B cell (primary cell): ENCODE measurements at regions of chr1 and their contacts with region 1.

Region 1: DNA sequence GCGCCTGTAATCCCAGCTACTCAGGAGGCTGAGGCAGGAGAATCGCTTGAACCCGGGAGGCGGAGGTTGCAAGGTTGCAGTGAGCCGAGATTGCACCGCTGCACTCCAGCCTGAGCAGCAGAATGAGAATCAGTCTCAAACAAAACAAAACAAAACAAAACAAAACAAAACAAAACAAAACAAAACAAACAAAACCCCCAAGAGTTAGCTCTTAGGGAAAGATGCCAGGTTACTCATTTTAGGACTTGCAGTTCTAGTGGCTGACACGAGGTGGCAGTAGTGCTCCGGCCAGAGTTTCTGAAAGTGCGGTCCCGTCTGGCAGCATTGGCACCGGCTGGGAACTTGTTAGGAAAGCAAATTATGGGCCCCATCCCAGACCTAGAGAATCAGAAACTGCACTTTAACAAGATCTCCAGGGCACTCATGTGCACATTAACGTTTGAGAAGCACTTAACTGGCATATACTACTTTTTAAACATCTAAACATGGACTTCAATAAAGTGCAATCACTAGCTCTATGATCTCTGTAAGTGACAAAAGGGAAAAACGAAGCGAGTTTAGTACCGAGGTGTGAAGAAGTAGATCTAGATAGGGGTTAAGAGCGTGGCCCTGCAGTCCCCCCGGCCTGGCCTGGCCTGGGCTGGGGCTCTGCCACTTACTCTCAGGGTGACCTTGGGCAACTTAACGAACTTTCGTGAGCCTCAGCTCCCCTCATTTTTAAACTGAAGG is 41.9 kb upstream of the TNFRSF1B start:
- DNase-seq: peak; percentile 87
- ATAC-seq: peak; percentile 85
- H3K4me3 ChIP-seq: no peak overlapping the region
- H3K4me3 Mint-ChIP-seq: peak overlapping the region; percentile 65
- H3K27ac ChIP-seq: no peak overlapping the region
- H3K27ac Mint-ChIP-seq: peak overlapping the region; percentile 83
- H3K4me1 ChIP-seq: peaks cover 20 to 31% of the 10 kb centered on the region in 2 donors
- H3K4me1 Mint-ChIP-seq: peaks cover 33% of the 10 kb centered on the region
- H3K27me3 ChIP-seq: no peaks in the 10 kb centered on the region
- H3K27me3 Mint-ChIP-seq: no peaks in the 10 kb centered on the region
- CTCF ChIP-seq: peak; percentile 93

Region 2: DNA sequence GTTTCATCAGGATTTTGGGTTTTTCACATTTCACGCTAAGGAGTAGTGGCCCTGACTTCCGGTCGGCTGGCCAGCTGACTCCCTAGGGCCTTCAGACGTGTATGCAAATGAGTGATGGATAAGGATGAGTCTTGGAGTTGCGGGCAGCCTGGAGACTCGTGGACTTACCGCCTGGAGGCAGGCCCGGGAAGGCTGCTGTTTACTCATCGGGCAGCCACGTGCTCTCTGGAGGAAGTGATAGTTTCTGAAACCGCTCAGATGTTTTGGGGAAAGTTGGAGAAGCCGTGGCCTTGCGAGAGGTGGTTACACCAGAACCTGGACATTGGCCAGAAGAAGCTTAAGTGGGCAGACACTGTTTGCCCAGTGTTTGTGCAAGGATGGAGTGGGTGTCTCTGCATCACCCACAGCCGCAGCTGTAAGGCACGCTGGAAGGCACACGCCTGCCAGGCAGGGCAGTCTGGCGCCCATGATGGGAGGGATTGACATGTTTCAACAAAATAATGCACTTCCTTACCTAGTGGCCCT is 18.8 kb after region 1 on chr1:
- CTCF ChIA-PET with region 1: interaction called, 169 read pairs
- POLR2A ChIA-PET with region 1: no interaction called
- intact Hi-C with region 1: no loop called
- DNase-seq: peak; percentile 77
- ATAC-seq: peak; percentile 65
- H3K4me3 ChIP-seq: no peak overlapping the region
- H3K4me3 Mint-ChIP-seq: peak overlapping the region; percentile 63
- H3K27ac ChIP-seq: peak overlapping the region; percentile 29 to 59
- H3K27ac Mint-ChIP-seq: peak overlapping the region; percentile 93
- H3K4me1 ChIP-seq: peaks cover 53 to 81% of the 10 kb centered on the region in 2 donors
- H3K4me1 Mint-ChIP-seq: peaks cover 71% of the 10 kb centered on the region
- H3K27me3 ChIP-seq: no peaks in the 10 kb centered on the region
- H3K27me3 Mint-ChIP-seq: no peaks in the 10 kb centered on the region
- CTCF ChIP-seq: no peak

Region 3: GRCh38 chr1:12166834-12167492 is 42.1 kb after region 1 on chr1 and contains the start of gene TNFRSF1B:
- CTCF ChIA-PET with region 1: interaction called, 45 read pairs
- POLR2A ChIA-PET with region 1: interaction called, 6 read pairs
- intact Hi-C with region 1: loop called (anchors 5 kb)
- DNase-seq: peak; percentile 81
- ATAC-seq: peak; percentile 76
- H3K4me3 ChIP-seq: peak within 1 kb of the TSS; percentile 69 to 80 (median 79)
- H3K4me3 Mint-ChIP-seq: peak within 1 kb of the TSS; percentile 98
- H3K27ac ChIP-seq: peak within 1 kb of the TSS; percentile 55 to 71
- H3K27ac Mint-ChIP-seq: peak within 1 kb of the TSS; percentile 94
- H3K4me1 ChIP-seq: peaks cover 25 to 52% of the 10 kb centered on the region in 2 donors
- H3K4me1 Mint-ChIP-seq: peaks cover 61% of the 10 kb centered on the region
- H3K27me3 ChIP-seq: no peaks in the 10 kb centered on the region
- H3K27me3 Mint-ChIP-seq: no peaks in the 10 kb centered on the region
- CTCF ChIP-seq: no peak
- total RNA-seq, gene TNFRSF1B: 86.6 and 99.4 TPM in 2 replicates

Region 4: GRCh38 chr1:12191242-12192032 is 66.6 kb after region 1 on chr1:
- CTCF ChIA-PET with region 1: interaction called, 685 read pairs
- POLR2A ChIA-PET with region 1: no interaction called
- intact Hi-C with region 1: no loop called
- DNase-seq: no peak
- ATAC-seq: no peak
- H3K4me3 ChIP-seq: no peak overlapping the region
- H3K4me3 Mint-ChIP-seq: no peak overlapping the region
- H3K27ac ChIP-seq: no peak overlapping the region
- H3K27ac Mint-ChIP-seq: no peak overlapping the region
- H3K4me1 ChIP-seq: peaks cover 0 to 7% of the 10 kb centered on the region in 2 donors
- H3K4me1 Mint-ChIP-seq: peaks cover 40% of the 10 kb centered on the region
- H3K27me3 ChIP-seq: no peaks in the 10 kb centered on the region
- H3K27me3 Mint-ChIP-seq: no peaks in the 10 kb centered on the region
- CTCF ChIP-seq: no peak

Region 5: DNA sequence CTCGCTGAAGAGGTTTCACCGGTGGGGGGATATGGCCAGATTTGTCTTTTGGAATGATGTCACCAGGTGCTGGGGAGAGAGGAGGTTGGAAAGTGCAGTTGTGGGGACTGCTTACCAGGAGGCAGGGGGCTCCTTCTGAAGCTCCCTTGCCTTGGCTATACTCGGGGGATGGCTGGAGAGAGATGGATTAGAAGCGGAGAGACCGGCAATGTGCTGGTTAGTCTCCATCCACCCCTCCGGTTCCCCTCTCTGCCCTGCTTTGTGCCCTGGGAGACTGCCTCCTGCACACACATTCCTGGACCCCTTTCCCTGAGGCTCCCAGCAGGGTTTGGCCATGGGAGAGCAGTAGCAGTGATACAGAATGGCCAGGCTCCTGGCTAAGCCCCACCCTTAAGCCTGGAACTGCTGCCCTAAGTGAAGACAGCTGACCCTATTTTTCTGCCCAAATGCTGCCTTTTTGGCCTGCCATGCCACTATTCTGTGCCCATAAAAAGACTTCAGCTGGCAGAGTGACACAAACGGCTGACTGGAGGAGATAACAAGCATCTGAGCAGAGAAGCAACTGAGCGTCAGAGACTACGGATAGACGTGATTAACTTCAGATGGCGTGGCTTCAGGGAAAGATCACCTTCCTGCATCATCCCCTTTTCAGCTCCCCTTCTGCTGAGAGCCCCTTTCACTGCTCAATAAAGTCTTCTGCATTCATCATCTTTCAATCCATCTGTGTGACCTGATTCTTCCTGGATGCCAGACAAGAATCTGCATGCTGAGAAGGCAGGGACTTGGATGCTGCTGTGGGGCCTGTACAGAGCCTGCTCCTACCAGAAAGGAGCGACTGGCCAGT is 90.5 kb after region 1 on chr1:
- CTCF ChIA-PET with region 1: interaction called, 685 read pairs
- POLR2A ChIA-PET with region 1: interaction called, 42 read pairs
- intact Hi-C with region 1: no loop called
- DNase-seq: no peak
- ATAC-seq: no peak
- H3K4me3 ChIP-seq: no peak overlapping the region
- H3K4me3 Mint-ChIP-seq: no peak overlapping the region
- H3K27ac ChIP-seq: no peak overlapping the region
- H3K27ac Mint-ChIP-seq: no peak overlapping the region
- H3K4me1 ChIP-seq: peaks cover 12 to 23% of the 10 kb centered on the region in 2 donors
- H3K4me1 Mint-ChIP-seq: peaks cover 20% of the 10 kb centered on the region
- H3K27me3 ChIP-seq: peaks cover 0 to 5% (median 0%) of the 10 kb centered on the region in 4 experiments
- H3K27me3 Mint-ChIP-seq: peaks cover under 1% of the 10 kb centered on the region
- CTCF ChIP-seq: no peak

Region 6: DNA sequence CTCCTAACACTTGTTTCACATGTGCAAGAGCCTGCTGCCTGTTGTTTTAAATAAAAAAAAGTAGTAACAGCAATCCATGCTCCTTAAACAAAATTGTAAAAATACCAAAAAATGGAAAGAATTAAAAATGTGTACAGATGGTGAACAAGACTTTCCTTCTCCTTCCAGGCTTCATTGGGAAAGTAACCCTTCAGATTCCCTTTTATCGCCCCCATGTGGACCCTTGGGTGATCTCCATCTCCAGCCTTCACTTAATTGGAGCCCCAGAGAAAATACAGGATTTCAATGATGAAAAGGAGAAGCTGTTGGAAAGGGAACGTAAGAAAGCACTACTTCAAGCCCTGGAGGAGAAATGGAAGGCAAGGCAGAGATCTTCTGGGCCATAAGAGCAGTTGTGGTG is 119.2 kb after region 1 on chr1:
- CTCF ChIA-PET with region 1: interaction called, 128 read pairs
- POLR2A ChIA-PET with region 1: no interaction called
- intact Hi-C with region 1: no loop called
- DNase-seq: peak; percentile 30
- ATAC-seq: no peak
- H3K4me3 ChIP-seq: no peak overlapping the region
- H3K4me3 Mint-ChIP-seq: no peak overlapping the region
- H3K27ac ChIP-seq: no peak overlapping the region
- H3K27ac Mint-ChIP-seq: no peak overlapping the region
- H3K4me1 ChIP-seq: no peaks in the 10 kb centered on the region
- H3K4me1 Mint-ChIP-seq: no peaks in the 10 kb centered on the region
- H3K27me3 ChIP-seq: no peaks in the 10 kb centered on the region
- H3K27me3 Mint-ChIP-seq: no peaks in the 10 kb centered on the region
- CTCF ChIP-seq: peak; percentile 31